Body of pancreas (tissue), 4 donors: ENCODE measurements at regions of chr14 and their contacts with region 1.

Region 1: GRCh38 chr14:104078031-104078455 is 7.5 kb upstream of the ASPG start:
- DNase-seq: peak; percentile 91 to 94 (median 94)
- ATAC-seq: peak; percentile 97
- H3K4me3 ChIP-seq: no peak overlapping the region
- H3K27ac ChIP-seq: no peak overlapping the region
- H3K4me1 ChIP-seq: peaks cover 8% of the 10 kb centered on the region
- H3K27me3 ChIP-seq: no peaks in the 10 kb centered on the region
- CTCF ChIP-seq: peak; percentile 99 to 100 (median 100)
- POLR2A ChIP-seq: no peak

Region 2: DNA sequence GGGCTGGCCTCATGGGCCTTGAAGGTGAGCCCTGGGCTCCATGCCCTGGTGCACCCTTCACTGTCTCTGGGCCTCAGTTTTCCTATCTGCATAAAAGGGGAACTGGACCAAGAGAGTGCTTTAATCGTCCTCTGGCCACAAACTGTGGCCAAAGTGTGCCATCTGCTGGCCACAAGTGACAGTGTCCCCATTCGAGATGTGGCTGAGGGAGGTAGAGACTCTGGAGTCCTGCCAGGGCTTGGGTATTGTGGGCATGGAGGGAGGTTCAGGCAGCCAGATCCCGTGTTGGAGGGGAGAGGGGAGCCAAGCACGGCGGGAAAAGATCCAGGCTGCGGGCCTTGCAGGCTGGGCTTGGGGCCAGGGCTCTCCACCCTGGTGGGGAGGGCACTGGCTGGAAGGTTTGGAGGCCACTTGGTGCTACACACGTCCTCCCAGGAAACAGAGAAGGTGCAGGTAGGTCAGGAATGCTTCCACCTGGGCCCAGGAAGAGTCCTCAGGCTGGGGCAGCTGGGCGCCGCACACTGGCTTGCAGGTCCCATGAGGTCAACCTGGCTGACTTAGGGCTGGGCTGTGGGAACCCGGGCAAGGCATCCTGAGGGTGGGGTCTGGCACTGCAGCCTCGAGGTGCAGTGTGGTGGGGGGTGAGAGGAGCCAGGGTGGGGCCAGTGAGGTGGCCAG is 53.1 kb after region 1 on chr14:
- intact Hi-C with region 1: loop called (anchors 5 kb)
- DNase-seq: peak; percentile 74 to 84 (median 79)
- ATAC-seq: peak; percentile 75
- H3K4me3 ChIP-seq: no peak overlapping the region
- H3K27ac ChIP-seq: no peak overlapping the region
- H3K4me1 ChIP-seq: peaks cover 14% of the 10 kb centered on the region
- H3K27me3 ChIP-seq: peaks cover 0 to 11% of the 10 kb centered on the region in 2 donors
- CTCF ChIP-seq: peak; percentile 53 to 93 (median 83)
- POLR2A ChIP-seq: no peak

Region 3: DNA sequence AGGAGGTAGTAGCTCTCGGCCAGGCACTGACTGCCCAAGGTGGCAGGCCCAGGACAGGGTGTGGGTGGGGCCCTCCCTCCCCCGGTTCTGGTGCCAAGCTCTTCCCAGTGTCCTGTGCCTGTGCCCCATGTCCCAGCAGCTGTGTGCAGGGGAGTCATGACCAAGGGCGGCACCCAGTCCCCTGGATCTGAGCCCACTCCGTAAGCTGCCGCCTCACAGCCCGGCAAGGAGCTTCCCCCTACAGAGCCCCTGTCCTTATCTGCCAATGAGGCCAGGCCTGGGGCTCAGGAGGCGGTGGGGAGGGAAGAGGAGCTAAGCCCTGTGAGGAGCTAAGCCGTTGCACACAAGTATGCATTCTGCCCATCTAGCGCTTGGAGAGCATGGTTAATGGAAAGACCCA is 495.9 kb after region 1 on chr14:
- intact Hi-C with region 1: loop called (anchors 5 kb)
- DNase-seq: no peak
- ATAC-seq: no peak
- H3K4me3 ChIP-seq: no peak overlapping the region
- H3K27ac ChIP-seq: no peak overlapping the region
- H3K4me1 ChIP-seq: peaks cover 20% of the 10 kb centered on the region
- H3K27me3 ChIP-seq: no peaks in the 10 kb centered on the region
- CTCF ChIP-seq: no peak
- POLR2A ChIP-seq: no peak